ENCODE measurements at regions of chr12 and their contacts with region 1.

Region 1: GRCh38 chr12:108691175-108691997 is 39.9 kb downstream of the CORO1C start:
- DNase-seq: peak; percentile 51
- H3K4me3 ChIP-seq: peak overlapping the region; percentile 39
- H3K27ac ChIP-seq: peak overlapping the region; percentile 35
- H3K4me1 ChIP-seq: peaks cover 37% of the 10 kb centered on the region
- CTCF ChIP-seq: peak; percentile 25; the same call in 1 of the 2 replicates

Region 2: GRCh38 chr12:108678104-108678730 is 13.2 kb before region 1 on chr12:
- CTCF ChIA-PET with region 1: interaction called, 11 read pairs
- POLR2A ChIA-PET with region 1: interaction called, 12 read pairs
- intact Hi-C with region 1: no loop called
- DNase-seq: no peak
- H3K4me3 ChIP-seq: no peak overlapping the region
- H3K27ac ChIP-seq: no peak overlapping the region
- H3K4me1 ChIP-seq: peaks cover 11% of the 10 kb centered on the region
- CTCF ChIP-seq: no peak

Region 3: GRCh38 chr12:108712165-108712924 is 21.0 kb after region 1 on chr12:
- CTCF ChIA-PET with region 1: no interaction called
- POLR2A ChIA-PET with region 1: interaction called, 8 read pairs
- intact Hi-C with region 1: loop called (anchors 2 kb)
- DNase-seq: peak; percentile 56
- H3K4me3 ChIP-seq: peak overlapping the region; percentile 53
- H3K27ac ChIP-seq: peak overlapping the region; percentile 58
- H3K4me1 ChIP-seq: peaks cover 42% of the 10 kb centered on the region
- CTCF ChIP-seq: no peak

Region 4: GRCh38 chr12:108731105-108731865 is 39.9 kb after region 1 on chr12 and contains the start of gene CORO1C:
- CTCF ChIA-PET with region 1: interaction called, 24 read pairs
- POLR2A ChIA-PET with region 1: interaction called, 6 read pairs
- intact Hi-C with region 1: no loop called
- DNase-seq: peak; percentile 96
- H3K4me3 ChIP-seq: peak within 1 kb of the TSS; percentile 90
- H3K27ac ChIP-seq: peak within 1 kb of the TSS; percentile 74
- H3K4me1 ChIP-seq: peaks cover 41% of the 10 kb centered on the region
- CTCF ChIP-seq: peak; percentile 85
- total RNA-seq, gene CORO1C: 74.7 and 76.3 TPM in 2 replicates

Measured in OCI-LY7 (cell line).